Activated CD4-positive, alpha-beta T cell treated with anti-CD3 and anti-CD28 coated beads, Interleukin-2, amount 10 ng/mL, durations not matched to agents 7 days and 5 days (primary cell): ENCODE measurements at regions of chr1 and their contacts with region 1.

Region 1: GRCh38 chr1:172443626-172444453 is at the start of gene PIGC:
- DNase-seq: peak; percentile 93
- H3K4me3 Mint-ChIP-seq: peak within 1 kb of the TSS; percentile 95
- H3K27ac Mint-ChIP-seq: peak within 1 kb of the TSS; percentile 94
- H3K4me1 Mint-ChIP-seq: peaks cover 39% of the 10 kb centered on the region
- H3K27me3 Mint-ChIP-seq: peaks cover 3% of the 10 kb centered on the region
- total RNA-seq, gene PIGC: 28.6 to 32.7 TPM

Region 2: DNA sequence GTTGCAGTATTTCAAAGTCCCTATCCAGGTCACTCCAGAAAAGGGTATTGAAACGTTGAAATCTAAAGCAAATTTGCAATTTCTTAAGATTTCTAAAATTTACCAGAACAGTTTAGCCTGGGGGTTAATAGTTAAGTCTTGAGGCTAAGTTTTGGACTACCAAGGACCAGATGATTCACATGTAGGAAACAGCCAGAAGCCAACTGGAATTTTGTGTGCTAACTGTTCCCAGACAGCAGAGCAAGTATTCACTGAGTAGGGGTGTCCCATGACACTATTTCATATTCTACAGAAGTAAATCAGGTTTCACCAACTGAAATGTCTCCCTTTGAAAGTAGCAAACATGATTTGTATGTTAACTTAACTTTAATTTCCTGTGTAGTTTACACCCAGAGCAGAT is 34.9 kb before region 1 on chr1:
- CTCF ChIA-PET with region 1: no interaction called
- POLR2A ChIA-PET with region 1: no interaction called
- DNase-seq: no peak
- H3K4me3 Mint-ChIP-seq: no peak overlapping the region
- H3K27ac Mint-ChIP-seq: no peak overlapping the region
- H3K4me1 Mint-ChIP-seq: no peaks in the 10 kb centered on the region
- H3K27me3 Mint-ChIP-seq: no peaks in the 10 kb centered on the region

Region 3: DNA sequence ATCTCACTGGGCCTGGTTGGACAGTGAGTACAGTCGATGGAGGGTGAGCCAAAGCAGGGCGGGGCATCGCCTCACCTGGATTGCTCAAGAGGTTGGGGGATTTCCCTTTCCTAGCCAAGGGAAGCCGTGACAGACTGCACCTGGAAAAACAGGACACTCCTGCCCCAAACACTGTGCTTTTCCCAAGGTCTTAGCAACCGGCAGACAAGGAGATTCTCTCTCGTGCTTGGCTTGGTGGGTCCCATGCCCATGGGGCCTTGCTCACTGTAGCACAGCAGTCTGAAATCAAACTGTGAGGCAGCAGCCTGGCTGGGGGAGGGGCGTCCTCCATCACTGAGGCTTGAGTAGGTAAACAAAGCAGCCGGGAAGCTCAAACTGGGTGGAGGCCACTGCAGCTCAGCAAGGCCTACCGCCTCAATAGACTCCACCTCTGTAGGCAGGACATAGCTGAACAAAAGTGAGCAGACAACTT is 12.1 kb before region 1 on chr1:
- CTCF ChIA-PET with region 1: interaction called, 13 read pairs
- POLR2A ChIA-PET with region 1: no interaction called
- DNase-seq: peak; percentile 48
- H3K4me3 Mint-ChIP-seq: peak overlapping the region; percentile 6
- H3K27ac Mint-ChIP-seq: peak overlapping the region; percentile 84
- H3K4me1 Mint-ChIP-seq: peaks cover 37% of the 10 kb centered on the region
- H3K27me3 Mint-ChIP-seq: no peaks in the 10 kb centered on the region

Region 4: GRCh38 chr1:172476218-172476811 is 32.5 kb after region 1 on chr1:
- CTCF ChIA-PET with region 1: no interaction called
- POLR2A ChIA-PET with region 1: no interaction called
- DNase-seq: no peak
- H3K4me3 Mint-ChIP-seq: no peak overlapping the region
- H3K27ac Mint-ChIP-seq: no peak overlapping the region
- H3K4me1 Mint-ChIP-seq: peaks cover 8% of the 10 kb centered on the region
- H3K27me3 Mint-ChIP-seq: peaks cover 9% of the 10 kb centered on the region